Mammary epithelial cell (primary cell): ENCODE measurements at regions of chr7 and their contacts with region 1.

Region 1: GRCh38 chr7:81499262-81500116 is 270.4 kb downstream of the HGF start:
- DNase-seq: peak; percentile 52
- H3K4me3 ChIP-seq: no peak overlapping the region
- H3K27ac ChIP-seq: no peak overlapping the region
- H3K4me1 ChIP-seq: peaks cover 3% of the 10 kb centered on the region
- H3K27me3 ChIP-seq: no peaks in the 10 kb centered on the region
- CTCF ChIP-seq: peak; percentile 56 to 62

Region 2: DNA sequence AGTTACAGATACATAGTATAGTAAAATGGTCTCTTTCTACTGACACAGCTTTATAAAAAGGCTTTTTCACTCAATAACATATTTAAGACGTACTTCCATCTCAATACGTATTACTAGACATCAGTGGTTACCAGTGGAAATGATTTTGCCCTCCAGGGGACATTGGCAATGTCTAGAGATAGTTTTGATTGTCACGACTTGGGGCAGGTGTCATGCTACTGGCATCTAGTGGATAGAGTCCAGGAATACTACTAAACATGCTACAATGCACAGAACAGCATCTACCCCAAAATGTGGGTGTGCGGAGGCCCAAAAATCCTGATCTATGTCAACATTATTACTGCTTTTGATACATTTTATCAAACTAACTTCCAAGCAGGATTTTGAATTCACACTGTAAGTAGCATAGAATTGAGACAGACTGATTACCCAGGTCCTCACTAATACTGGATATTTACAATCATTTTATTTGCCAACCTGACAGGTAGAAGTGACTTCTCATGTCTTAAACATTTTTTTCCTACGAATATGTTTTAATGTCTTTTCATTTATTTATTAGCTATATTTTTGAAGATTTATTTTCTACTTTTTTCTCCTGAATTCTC is 216.6 kb after region 1 on chr7:
- CTCF ChIA-PET with region 1: no interaction called
- dilution Hi-C with region 1: no loop called
- in situ Hi-C with region 1: no loop called
- intact Hi-C with region 1: loop called (anchors 1 kb)
- DNase-seq: peak; percentile 42
- H3K4me3 ChIP-seq: no peak overlapping the region
- H3K27ac ChIP-seq: no peak overlapping the region
- H3K4me1 ChIP-seq: no peaks in the 10 kb centered on the region
- H3K27me3 ChIP-seq: no peaks in the 10 kb centered on the region
- CTCF ChIP-seq: peak; percentile 59 to 86

Region 3: GRCh38 chr7:81776948-81777630 is 277.6 kb after region 1 on chr7:
- CTCF ChIA-PET with region 1: no interaction called
- dilution Hi-C with region 1: no loop called
- in situ Hi-C with region 1: no loop called
- intact Hi-C with region 1: loop called (anchors 2 kb)
- DNase-seq: no peak
- H3K4me3 ChIP-seq: no peak overlapping the region
- H3K27ac ChIP-seq: no peak overlapping the region
- H3K4me1 ChIP-seq: no peaks in the 10 kb centered on the region
- H3K27me3 ChIP-seq: no peaks in the 10 kb centered on the region
- CTCF ChIP-seq: no peak

Region 4: GRCh38 chr7:82017334-82017943 is 518.0 kb after region 1 on chr7:
- CTCF ChIA-PET with region 1: interaction called, 6 read pairs
- dilution Hi-C with region 1: no loop called
- in situ Hi-C with region 1: loop called in 1 of 2 experiments (anchors 10 kb)
- intact Hi-C with region 1: loop called (anchors 1 kb)
- DNase-seq: peak; percentile 7
- H3K4me3 ChIP-seq: no peak overlapping the region
- H3K27ac ChIP-seq: no peak overlapping the region
- H3K4me1 ChIP-seq: peaks cover 8% of the 10 kb centered on the region
- H3K27me3 ChIP-seq: no peaks in the 10 kb centered on the region
- CTCF ChIP-seq: peak; percentile 40 to 67

Region 5: GRCh38 chr7:82572195-82572880 is 1072.8 kb after region 1 on chr7:
- CTCF ChIA-PET with region 1: no interaction called
- dilution Hi-C with region 1: no loop called
- in situ Hi-C with region 1: loop called (anchors 25 kb)
- intact Hi-C with region 1: loop called (anchors 10 kb)
- DNase-seq: peak; percentile 60
- H3K4me3 ChIP-seq: no peak overlapping the region
- H3K27ac ChIP-seq: no peak overlapping the region
- H3K4me1 ChIP-seq: no peaks in the 10 kb centered on the region
- H3K27me3 ChIP-seq: no peaks in the 10 kb centered on the region
- CTCF ChIP-seq: peak; percentile 85 to 95

Region 6: DNA sequence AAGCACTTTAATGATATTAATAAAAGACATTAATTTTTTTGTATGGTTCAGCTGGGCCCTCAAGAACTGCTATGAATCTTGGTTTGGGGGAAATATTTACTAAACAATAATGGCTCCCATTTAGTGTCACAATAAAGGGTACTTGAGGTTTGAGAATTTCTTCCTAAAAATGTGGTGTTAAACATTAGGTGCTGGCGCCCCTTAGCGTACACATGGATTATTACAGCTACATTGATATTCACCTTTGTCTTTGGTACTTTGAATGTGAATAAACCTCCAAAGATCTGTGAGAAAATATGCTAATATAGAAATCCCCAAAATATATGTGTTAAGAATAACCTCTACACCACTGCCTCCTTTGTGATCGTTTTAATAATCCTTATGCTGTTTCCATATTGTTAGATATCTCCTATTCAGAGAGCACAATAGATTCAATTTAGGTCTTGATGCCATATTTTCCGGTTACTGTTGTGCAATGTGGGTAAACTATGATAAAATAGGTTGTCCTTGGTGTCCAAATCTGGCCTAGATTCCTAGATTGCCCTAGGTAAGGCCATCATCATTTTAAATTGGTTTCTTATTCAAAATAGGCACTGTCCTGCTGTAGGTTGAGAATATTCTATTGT is 1105.9 kb after region 1 on chr7:
- CTCF ChIA-PET with region 1: no interaction called
- dilution Hi-C with region 1: no loop called
- in situ Hi-C with region 1: no loop called
- intact Hi-C with region 1: loop called (anchors 10 kb)
- DNase-seq: peak; percentile 16
- H3K4me3 ChIP-seq: no peak overlapping the region
- H3K27ac ChIP-seq: no peak overlapping the region
- H3K4me1 ChIP-seq: no peaks in the 10 kb centered on the region
- H3K27me3 ChIP-seq: no peaks in the 10 kb centered on the region
- CTCF ChIP-seq: peak; percentile 74 to 75

Region 7: GRCh38 chr7:82740246-82740848 is 1240.9 kb after region 1 on chr7:
- CTCF ChIA-PET with region 1: no interaction called
- dilution Hi-C with region 1: no loop called
- in situ Hi-C with region 1: loop called in 1 of 2 experiments (anchors 25 kb)
- intact Hi-C with region 1: no loop called
- DNase-seq: peak; percentile 40
- H3K4me3 ChIP-seq: no peak overlapping the region
- H3K27ac ChIP-seq: no peak overlapping the region
- H3K4me1 ChIP-seq: no peaks in the 10 kb centered on the region
- H3K27me3 ChIP-seq: no peaks in the 10 kb centered on the region
- CTCF ChIP-seq: peak; percentile 77 to 82